A673 (cell line): ENCODE measurements at regions of chr3 and their contacts with region 1.

Region 1: DNA sequence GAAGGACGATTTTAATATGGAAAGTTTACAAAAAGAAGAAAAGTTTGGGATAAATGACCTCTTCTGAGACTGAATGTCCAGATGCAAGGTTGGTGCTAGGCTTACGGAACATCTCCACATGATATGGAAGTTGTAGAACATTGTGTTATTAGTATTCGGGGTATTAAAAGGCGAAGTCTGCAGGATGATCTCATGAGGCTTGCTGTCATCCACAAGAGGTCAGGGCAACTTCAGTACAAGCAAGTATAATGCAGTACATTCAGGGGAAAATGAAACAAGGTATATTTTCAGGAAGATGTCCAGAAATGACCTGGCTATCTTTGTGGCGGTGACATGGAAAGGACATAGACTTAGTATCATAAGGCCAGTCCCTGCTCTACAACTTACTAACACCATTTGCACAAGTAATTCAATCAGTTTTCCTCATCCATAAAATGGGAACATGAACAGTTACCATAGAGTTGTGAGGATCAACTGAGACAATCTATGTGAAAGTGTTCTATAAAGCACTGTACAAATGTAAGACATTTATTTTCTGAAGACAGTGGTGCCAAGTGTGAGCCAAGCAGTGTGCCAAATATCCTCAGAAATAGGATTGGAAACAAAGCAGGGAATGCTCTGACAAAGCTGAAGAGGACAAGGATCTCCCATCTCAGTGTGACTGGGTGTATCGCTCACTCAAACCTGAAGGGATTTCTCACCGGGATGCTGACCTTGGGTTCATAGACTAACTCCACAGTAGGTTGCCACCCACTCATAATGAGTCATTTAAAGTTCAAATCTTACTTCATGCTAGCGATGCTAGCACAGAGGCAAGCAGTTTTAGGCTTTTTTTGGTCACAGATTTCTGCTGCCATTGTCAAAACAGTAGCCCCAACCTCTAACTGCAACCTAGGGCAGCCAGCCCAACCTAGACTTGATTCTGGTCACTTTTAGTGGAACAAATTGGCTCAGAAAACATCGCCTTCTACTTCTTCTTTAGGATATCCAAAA is 118.3 kb downstream of the TIGIT start:
- DNase-seq: peak; percentile 61
- H3K4me3 ChIP-seq: peak overlapping the region; percentile 20
- H3K27ac ChIP-seq: peak overlapping the region; percentile 86
- H3K4me1 ChIP-seq: peaks cover 84% of the 10 kb centered on the region
- H3K27me3 ChIP-seq: no peaks in the 10 kb centered on the region
- CTCF ChIP-seq: peak; percentile 34; the same call in 1 of the 2 replicates

Region 2: DNA sequence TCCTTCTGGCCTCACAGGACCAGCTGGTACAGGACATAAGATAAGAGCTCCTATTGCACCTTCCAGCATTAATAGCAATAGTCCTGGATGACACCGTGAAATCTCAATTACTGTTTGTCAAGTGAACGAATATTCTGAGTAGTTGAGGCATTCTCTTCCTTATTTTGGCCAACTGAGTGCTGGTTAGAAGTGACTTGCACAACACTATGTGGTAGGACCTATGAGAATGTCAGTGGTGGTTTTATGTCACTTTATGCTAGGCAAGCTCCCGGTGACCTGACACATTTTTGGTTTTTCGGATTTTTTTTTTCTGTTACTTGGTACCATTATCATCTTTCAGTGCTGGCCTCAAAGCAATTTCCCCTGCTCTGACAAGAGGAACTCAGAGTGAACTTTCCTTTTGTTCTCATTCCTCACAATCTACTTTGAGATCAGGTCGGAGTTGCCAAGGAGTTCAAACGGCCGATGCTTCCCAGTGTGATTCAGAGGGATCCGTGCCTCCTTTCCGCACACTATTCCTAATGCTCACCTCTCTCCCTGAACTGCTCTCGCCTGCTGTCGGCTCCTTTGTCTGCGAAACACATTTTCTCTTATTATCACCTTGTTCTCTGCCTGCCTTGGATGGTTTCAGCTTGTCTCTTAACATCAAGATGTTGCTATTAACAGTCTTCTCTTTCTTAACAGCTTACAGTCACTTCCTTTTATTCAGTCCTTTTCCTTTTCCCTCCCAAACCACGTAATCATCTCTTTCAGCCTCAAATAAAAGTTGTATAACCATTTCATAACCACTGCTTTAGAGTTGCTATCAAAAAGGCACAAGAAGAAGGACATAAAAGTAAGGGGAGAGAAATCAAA is 319.7 kb before region 1 on chr3:
- CTCF ChIA-PET with region 1: no interaction called
- POLR2A ChIA-PET with region 1: no interaction called
- intact Hi-C with region 1: no loop called
- DNase-seq: no peak
- H3K4me3 ChIP-seq: no peak overlapping the region
- H3K27ac ChIP-seq: no peak overlapping the region
- H3K4me1 ChIP-seq: peaks cover 5% of the 10 kb centered on the region
- H3K27me3 ChIP-seq: no peaks in the 10 kb centered on the region
- CTCF ChIP-seq: no peak

Region 3: GRCh38 chr3:114451561-114452018 is 39.5 kb after region 1 on chr3:
- CTCF ChIA-PET with region 1: interaction called, 4 read pairs
- POLR2A ChIA-PET with region 1: no interaction called
- intact Hi-C with region 1: loop called (anchors 5 kb)
- DNase-seq: no peak
- H3K4me3 ChIP-seq: peak overlapping the region; percentile 58
- H3K27ac ChIP-seq: peak overlapping the region; percentile 83
- H3K4me1 ChIP-seq: peaks cover 67% of the 10 kb centered on the region
- H3K27me3 ChIP-seq: no peaks in the 10 kb centered on the region
- CTCF ChIP-seq: no peak